ENCODE measurements at regions of chr4 and their contacts with region 1.

Region 1: DNA sequence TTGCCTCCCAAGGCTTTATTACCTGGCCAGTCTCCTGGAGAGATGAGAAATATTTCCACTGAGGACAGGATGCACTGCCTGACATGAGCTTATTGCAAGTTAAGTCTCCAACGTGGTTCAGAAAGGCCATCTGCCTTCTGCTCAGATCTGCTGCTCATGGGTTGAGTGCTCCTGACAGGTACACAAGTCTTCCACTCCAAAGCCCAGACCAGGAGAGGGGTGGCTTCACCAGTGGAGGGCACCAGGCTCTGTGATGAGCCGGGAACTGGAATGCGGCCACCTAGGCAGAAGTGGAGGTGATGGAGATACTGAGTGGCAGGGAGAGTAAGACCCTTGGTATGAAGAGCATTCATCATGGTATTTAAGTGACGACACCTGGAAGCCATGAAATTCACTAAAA is 79.5 kb upstream of the IRF2 start:
- DNase-seq: no peak
- ATAC-seq: no peak
- H3K4me3 ChIP-seq: no peak overlapping the region
- H3K27ac ChIP-seq: no peak overlapping the region
- H3K4me1 ChIP-seq: no peaks in the 10 kb centered on the region
- H3K27me3 ChIP-seq: no peaks in the 10 kb centered on the region

Region 2: GRCh38 chr4:184408021-184408710 is 145.7 kb before region 1 on chr4:
- intact Hi-C with region 1: no loop called
- DNase-seq: no peak
- ATAC-seq: no peak
- H3K4me3 ChIP-seq: no peak overlapping the region
- H3K27ac ChIP-seq: peak overlapping the region; percentile 65
- H3K4me1 ChIP-seq: peaks cover 28% of the 10 kb centered on the region
- H3K27me3 ChIP-seq: no peaks in the 10 kb centered on the region

Region 3: DNA sequence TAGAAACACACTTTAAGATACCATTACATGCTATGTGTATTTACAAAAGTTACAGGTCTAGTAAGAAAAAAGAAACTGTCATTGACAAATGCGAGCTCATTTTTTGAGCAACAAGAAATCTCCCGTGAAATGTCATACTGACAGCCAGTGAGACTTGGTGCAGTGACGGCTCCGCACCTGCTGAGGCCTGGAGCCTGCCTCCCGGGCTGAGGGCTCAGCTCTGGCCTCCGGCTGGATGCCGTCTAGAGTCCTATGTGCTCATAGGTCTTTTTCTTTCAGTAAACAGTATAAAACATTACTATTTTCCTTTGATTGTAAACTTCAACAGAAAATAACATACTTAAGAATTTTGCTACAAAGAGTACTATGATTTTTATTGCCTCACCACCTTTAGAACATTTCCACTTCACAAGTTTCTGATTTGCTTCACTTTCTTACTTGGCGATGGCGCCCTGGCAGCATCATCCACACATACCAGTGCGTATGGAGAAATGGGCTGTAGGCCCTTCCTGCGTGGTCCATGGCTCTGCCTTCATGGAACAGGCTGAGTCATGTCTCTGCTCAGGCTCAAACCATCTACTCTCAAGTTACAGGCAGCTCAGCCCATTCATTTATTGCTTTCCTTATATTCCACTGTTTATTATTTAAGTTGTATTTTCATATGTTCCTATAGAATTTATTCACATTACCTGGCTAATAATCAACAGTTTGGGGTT is 74.0 kb after region 1 on chr4:
- intact Hi-C with region 1: no loop called
- DNase-seq: no peak
- ATAC-seq: no peak
- H3K4me3 ChIP-seq: no peak overlapping the region
- H3K27ac ChIP-seq: no peak overlapping the region
- H3K4me1 ChIP-seq: no peaks in the 10 kb centered on the region
- H3K27me3 ChIP-seq: no peaks in the 10 kb centered on the region

Region 4: GRCh38 chr4:184649026-184649970 is 95.4 kb after region 1 on chr4 and contains the starts of genes CASP3 and PRIMPOL:
- intact Hi-C with region 1: loop called in 1 of 4 experiments (anchors 10 kb)
- DNase-seq: peak; percentile 97 to 99 (median 99)
- ATAC-seq: peak; percentile 98 to 99
- H3K4me3 ChIP-seq: peak within 1 kb of the TSS; percentile 93
- H3K27ac ChIP-seq: peak within 1 kb of the TSS; percentile 97
- H3K4me1 ChIP-seq: peaks cover 7% of the 10 kb centered on the region
- H3K27me3 ChIP-seq: no peaks in the 10 kb centered on the region
- total RNA-seq, gene CASP3: 8.6 to 11.0 (median 10.2) TPM
- total RNA-seq, gene PRIMPOL: 8.9 to 12.0 (median 11.2) TPM